ENCODE measurements at regions of chr2 and their contacts with region 1.

Region 1: DNA sequence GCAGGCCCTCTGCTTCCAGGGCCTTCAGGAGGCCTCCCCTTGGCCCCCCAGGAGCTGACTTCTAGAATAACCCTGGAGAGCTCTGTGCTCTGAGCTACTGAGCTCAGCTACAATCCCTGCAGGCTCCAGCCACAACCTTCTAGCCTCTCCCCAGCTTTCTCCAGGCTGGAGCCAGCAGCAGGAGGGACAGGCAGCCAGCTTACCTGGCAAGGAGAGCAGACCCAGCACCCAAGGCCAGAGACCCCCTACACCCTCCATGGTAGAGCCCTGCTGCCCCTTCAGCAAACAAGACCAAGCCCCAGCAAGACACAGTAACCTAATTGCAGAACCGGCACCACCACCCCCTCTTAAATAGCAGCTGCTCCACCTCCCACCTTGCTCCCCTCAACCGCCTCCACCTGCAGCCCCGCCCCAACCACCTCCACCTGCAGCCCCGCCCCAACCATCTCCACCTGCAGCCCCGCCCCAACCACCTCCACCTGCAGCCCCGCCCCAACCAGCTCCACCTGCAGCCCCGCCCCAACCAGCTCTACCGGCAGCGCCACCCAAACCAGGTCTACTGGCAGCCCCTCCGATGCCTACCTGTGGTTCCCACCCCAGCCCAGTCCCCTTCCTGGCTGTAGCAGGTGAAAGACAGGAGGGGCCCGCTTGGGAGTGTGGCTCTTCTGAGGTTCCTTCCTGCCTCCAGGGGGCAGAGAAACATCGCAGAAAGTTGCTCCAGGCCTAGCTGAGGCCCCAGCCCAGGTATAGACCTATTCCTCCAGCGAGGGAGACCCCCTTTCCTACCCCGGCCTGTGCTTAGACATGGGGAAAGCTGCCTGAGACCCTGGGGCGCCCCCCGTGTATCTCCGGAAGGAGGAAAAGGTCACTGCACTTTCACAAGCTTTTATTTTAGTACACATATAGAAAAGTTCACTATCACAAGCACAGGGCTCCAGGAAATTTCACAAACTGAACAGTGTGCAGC is at the start of gene ASTL:
- DNase-seq: peak; percentile 59

Region 2: DNA sequence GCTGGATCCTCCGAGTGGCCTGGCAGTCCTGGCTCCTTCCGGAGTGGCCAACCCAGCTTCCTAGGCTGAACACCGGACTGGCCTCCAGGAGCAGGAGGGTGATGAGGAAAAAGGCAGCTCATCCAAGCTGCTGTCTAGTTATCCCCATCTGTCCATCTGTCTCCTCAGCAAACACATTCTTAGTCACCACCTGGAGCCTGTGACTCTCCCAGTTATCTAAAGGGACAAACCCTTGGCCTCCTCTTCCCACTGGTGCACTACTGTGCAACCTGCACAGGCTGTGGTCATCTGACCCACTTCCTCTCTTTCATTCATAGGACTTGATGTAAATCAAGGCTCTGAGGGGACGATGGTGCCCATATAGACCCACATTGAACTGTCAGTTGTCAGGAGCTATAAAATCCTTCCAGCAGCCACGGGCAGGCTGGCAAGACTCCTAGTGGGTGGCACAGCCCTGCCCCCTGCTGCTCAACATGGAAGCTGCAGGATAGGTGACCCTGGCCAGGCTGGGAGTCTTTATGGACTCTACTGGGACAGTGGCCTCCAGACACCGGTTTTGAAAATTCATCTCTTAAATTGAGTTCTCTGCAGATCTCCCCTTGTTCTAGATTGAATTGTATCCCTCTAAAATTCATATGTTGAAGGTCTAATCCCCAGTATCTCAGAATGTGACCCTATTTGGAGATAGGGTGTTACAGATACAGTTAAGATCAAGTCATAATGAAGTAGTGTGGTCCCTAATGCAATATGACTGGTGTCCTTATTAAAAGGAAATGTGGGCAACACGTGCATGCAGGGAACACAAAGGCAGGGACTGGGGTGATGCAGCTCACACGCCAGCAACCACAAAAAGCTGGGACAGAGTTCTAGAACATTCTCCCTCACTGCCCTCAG is 36.0 kb after region 1 on chr2:
- CTCF ChIA-PET with region 1: interaction called, 40 read pairs
- POLR2A ChIA-PET with region 1: no interaction called
- DNase-seq: peak; percentile 83